PC-3 (cell line): ENCODE measurements at regions of chr12 and their contacts with region 1.

Region 1: DNA sequence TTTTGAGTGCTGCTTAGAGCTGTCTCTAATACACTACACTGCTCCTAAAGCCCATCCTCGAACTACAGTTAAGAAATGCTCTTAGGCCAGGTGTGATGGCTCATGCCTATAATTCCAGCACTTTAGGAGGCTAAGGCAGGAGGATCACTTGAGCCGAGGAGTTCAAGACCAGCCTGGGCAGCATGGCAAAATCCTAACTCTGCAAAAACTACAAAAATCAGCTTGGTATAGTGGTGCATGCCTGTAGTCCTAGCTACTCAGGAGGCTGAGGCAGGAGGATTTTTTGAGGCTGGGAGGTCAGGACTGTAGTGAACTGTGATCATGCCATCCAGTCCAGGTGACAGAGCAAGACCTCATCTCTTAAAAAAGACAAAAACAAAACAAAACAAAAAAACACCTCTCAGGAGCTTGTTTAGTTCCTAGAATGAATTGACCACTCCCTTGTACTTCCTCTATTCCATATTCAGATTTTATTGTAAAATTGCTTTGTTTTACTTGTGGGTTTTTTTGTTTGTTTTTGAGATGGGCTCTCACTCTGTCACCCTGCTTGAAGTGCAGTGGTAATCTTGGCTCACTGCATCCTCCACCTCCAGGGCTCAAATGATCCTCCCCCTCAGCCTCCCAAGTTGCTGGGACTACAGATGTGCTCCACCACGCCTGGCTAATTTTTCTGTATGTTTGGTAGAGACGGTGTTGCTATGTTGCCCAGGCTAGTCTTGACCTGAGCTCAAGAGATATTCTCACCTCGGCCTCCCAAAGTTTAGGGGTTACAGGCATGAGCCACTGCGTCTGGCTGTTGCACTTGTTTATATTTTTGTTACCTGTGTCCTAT is 13.6 kb downstream of the MDM2 start:
- DNase-seq: no peak
- ATAC-seq: peak; percentile 63
- H3K4me3 ChIP-seq: no peak overlapping the region
- H3K27ac ChIP-seq: no peak overlapping the region
- H3K4me1 ChIP-seq: peaks cover under 1% of the 10 kb centered on the region
- H3K27me3 ChIP-seq: no peaks in the 10 kb centered on the region
- CTCF ChIP-seq: no peak

Region 2: GRCh38 chr12:68733661-68734071 is 87.9 kb before region 1 on chr12:
- CTCF ChIA-PET with region 1: no interaction called
- POLR2A ChIA-PET with region 1: no interaction called
- intact Hi-C with region 1: no loop called
- DNase-seq: peak; percentile 15
- ATAC-seq: no peak
- H3K4me3 ChIP-seq: no peak overlapping the region
- H3K27ac ChIP-seq: no peak overlapping the region
- H3K4me1 ChIP-seq: no peaks in the 10 kb centered on the region
- H3K27me3 ChIP-seq: no peaks in the 10 kb centered on the region
- CTCF ChIP-seq: no peak

Region 3: DNA sequence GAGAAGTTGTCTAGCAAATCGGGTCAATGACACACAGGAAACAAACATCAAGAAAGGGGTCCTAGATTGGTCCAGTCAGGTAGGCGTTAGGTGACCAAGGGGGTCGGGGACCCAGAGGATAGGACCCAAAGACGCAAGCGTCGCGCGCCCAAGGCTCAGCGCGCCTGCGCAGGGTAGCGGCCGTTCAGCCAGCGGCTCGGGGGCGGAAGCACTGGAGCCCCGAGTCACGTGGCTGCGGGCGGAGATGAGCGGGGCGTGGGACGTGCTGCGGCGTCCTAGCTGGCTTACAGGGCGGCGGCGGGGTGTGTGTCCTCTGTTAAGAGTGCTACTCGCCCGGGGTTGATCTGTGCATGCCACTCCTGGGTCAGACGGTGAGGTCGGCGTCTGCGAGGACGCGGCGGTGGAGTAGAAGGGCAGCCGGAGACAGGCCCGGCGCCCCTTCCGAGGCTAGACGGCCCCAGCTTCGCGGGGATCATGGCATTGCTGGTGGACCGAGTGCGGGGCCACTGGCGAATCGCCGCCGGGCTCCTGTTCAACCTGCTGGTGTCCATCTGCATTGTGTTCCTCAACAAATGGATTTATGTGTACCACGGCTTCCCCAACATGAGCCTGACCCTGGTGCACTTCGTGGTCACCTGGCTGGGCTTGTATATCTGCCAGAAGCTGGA is 75.5 kb before region 1 on chr12 and contains the start of gene SLC35E3:
- CTCF ChIA-PET with region 1: no interaction called
- POLR2A ChIA-PET with region 1: no interaction called
- intact Hi-C with region 1: loop called (anchors 5 kb)
- DNase-seq: peak; percentile 92
- ATAC-seq: peak; percentile 96
- H3K4me3 ChIP-seq: peak within 1 kb of the TSS; percentile 74
- H3K27ac ChIP-seq: peak within 1 kb of the TSS; percentile 40
- H3K4me1 ChIP-seq: peaks cover 7% of the 10 kb centered on the region; the same call in 1 of the 2 replicates
- H3K27me3 ChIP-seq: no peaks in the 10 kb centered on the region
- CTCF ChIP-seq: no peak
- total RNA-seq, gene SLC35E3: 2.2 and 2.6 TPM in 2 replicates

Region 4: GRCh38 chr12:68794653-68795251 is 26.8 kb before region 1 on chr12:
- CTCF ChIA-PET with region 1: no interaction called
- POLR2A ChIA-PET with region 1: interaction called, 15 read pairs
- intact Hi-C with region 1: no loop called
- DNase-seq: peak; percentile 80
- ATAC-seq: peak; percentile 99
- H3K4me3 ChIP-seq: no peak overlapping the region
- H3K27ac ChIP-seq: peak overlapping the region; percentile 34
- H3K4me1 ChIP-seq: peaks cover 10% of the 10 kb centered on the region; the same call in 1 of the 2 replicates
- H3K27me3 ChIP-seq: no peaks in the 10 kb centered on the region
- CTCF ChIP-seq: no peak